Activated CD4-positive, alpha-beta memory T cell treated with anti-CD3 and anti-CD28 coated beads for 36 hours (primary cell): ENCODE measurements at regions of chr1 and their contacts with region 1.

Region 1: GRCh38 chr1:167263819-167264464 is 43.3 kb downstream of the POU2F1 start:
- DNase-seq: no peak
- H3K4me3 Mint-ChIP-seq: no peak overlapping the region
- H3K27ac Mint-ChIP-seq: no peak overlapping the region
- H3K4me1 Mint-ChIP-seq: peaks cover 23% of the 10 kb centered on the region
- H3K27me3 Mint-ChIP-seq: no peaks in the 10 kb centered on the region

Region 2: DNA sequence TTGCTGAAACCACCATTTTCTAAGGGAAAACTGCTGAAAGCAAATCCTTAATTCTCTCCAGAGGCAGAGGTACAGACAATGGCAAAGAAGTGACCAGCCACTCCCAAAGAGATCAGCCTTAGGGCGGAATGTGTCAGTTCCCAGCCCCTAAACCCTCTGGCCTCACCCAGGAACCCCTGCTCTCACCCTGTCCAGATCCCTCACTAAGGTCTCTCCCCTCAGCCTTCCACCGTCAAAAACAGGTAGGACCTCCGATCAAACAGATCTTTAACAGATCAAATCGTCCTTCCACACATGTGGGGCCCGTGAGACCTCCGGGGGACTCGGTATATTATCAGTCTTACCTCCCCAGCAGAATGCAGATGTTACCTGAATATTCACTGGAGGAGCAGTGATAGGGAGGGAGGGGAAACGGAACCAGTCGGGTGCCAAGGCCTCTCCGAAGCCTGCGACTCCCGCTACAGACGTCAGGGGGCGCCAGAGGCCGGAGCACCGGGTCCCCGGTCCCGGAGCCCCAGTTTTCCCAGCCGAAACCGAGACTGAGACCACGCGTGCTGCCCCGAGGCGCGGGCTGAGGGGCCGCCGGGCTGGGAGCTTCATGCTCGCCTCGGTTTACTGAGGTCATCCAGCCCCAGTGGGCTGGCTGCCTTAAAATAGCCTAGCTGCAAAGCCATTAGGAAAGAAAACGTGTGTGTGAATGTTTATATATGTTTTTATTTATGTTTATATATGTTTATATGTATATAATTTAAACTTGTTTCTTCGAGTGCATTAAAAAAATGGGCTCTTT is 197.4 kb before region 1 on chr1:
- CTCF ChIA-PET with region 1: interaction called, 4 read pairs
- POLR2A ChIA-PET with region 1: no interaction called
- intact Hi-C with region 1: loop called (anchors 5 kb)
- DNase-seq: peak; percentile 83
- H3K4me3 Mint-ChIP-seq: peak overlapping the region; percentile 30
- H3K27ac Mint-ChIP-seq: no peak overlapping the region
- H3K4me1 Mint-ChIP-seq: peaks cover 2% of the 10 kb centered on the region
- H3K27me3 Mint-ChIP-seq: no peaks in the 10 kb centered on the region

Region 3: DNA sequence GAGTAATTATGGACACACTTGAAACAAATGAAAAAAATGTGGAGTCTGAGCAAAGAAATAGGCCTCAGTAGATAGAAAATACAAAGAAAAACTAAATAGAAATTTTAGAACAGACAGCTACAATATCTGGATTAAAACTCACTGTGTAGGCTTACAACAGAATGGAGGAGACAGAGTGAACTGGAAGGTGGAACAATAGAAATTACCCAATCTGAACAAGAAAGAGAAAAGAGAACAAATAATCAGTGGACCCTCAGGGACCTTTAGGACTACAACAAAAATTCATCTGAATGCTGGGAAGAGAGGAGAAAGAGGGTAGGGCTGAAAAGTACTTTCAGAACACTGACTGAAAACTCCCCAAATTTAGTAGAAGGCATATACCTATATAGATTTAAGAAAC is 46.8 kb after region 1 on chr1:
- CTCF ChIA-PET with region 1: no interaction called
- POLR2A ChIA-PET with region 1: no interaction called
- intact Hi-C with region 1: loop called (anchors 2 kb)
- DNase-seq: no peak
- H3K4me3 Mint-ChIP-seq: no peak overlapping the region
- H3K27ac Mint-ChIP-seq: no peak overlapping the region
- H3K4me1 Mint-ChIP-seq: peaks cover 6% of the 10 kb centered on the region
- H3K27me3 Mint-ChIP-seq: no peaks in the 10 kb centered on the region

Region 4: GRCh38 chr1:167401260-167401873 is 137.4 kb after region 1 on chr1:
- CTCF ChIA-PET with region 1: interaction called, 13 read pairs
- POLR2A ChIA-PET with region 1: no interaction called
- intact Hi-C with region 1: no loop called
- DNase-seq: peak; percentile 64
- H3K4me3 Mint-ChIP-seq: no peak overlapping the region
- H3K27ac Mint-ChIP-seq: no peak overlapping the region
- H3K4me1 Mint-ChIP-seq: no peaks in the 10 kb centered on the region
- H3K27me3 Mint-ChIP-seq: no peaks in the 10 kb centered on the region

Region 5: DNA sequence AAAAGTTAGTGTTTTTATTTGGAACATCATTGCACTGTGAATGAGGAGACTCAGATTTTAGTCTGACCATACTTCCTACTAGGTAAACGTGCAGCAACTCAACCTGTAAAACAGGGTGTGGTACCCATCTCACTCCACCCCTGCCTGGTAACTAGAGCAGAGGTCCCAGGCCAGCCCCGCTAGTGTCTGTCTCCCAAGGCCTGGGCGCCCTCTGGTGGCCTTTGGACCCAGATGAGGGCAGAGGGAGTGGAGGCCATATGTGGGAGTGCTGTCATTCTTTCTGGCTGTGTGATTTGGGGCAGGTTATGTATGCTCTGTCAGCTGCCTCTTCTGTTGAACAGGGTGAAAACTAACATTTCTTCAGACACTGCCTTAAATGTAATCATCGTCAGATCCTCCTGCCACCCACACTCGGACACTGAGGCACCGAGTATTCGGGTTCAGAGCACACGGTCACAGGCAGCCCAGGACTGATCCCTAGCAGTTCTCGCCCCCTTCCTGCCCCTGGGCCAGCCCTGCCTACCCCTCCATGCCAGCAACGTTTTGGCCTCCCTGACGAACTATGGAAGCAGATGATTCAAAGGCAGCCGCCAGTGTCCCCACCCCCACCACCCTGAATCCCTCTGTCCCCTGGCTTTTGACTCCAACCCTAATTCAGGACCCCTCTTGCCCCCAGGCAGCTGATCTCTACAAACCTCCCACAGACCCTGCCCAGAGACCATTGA is 178.3 kb after region 1 on chr1:
- CTCF ChIA-PET with region 1: interaction called, 37 read pairs
- POLR2A ChIA-PET with region 1: no interaction called
- intact Hi-C with region 1: loop called (anchors 2 kb)
- DNase-seq: peak; percentile 91
- H3K4me3 Mint-ChIP-seq: no peak overlapping the region
- H3K27ac Mint-ChIP-seq: peak overlapping the region; percentile 64
- H3K4me1 Mint-ChIP-seq: peaks cover 71% of the 10 kb centered on the region
- H3K27me3 Mint-ChIP-seq: no peaks in the 10 kb centered on the region

Region 6: DNA sequence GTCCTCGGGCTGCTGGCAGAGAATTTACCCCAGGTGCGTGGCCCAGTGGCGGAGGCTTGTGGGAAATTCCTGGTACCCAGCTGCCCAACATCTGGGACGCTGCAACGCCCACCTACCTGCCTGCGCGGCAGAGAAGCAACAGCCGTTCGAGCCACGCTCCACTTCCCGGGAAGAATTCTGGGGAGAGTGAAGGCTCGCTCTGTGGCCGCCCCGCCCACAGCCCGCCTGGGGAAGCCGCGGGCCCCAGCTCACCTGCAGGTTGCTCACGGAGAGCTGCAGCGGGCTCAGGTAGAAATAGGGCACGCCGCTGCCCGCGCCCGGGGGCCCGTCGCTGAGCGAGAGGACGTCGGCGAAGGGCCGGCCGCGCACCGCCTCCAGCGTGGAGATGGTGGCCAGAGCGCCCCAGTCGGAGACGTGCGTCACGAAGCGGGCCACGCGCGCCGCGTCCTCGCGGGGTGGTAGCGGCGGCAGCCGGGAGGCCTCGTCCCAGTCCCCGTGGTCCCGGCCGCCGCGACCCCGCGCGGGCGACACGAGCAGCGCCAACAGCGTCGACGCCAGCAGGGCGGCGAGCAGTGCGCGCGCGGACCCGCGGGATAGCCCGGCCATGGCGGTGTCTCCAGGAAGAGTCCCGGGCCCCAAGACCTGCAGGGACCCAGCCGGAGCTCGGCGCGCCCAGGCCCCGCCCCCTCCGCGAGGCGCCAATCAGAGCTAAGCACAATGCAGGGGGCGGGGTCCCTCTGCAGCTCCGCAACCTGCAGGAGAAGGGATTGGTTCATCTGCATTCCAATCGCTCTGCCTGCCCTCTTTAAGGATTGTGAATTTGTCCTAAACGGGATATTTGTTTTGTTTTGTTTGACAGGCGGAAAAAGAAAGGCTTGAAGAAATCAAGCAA is 289.4 kb after region 1 on chr1 and contains the start of gene CREG1:
- CTCF ChIA-PET with region 1: interaction called, 26 read pairs
- POLR2A ChIA-PET with region 1: interaction called, 3 read pairs
- intact Hi-C with region 1: no loop called
- DNase-seq: peak; percentile 94
- H3K4me3 Mint-ChIP-seq: peak within 1 kb of the TSS; percentile 84
- H3K27ac Mint-ChIP-seq: no peak within 1 kb of the TSS
- H3K4me1 Mint-ChIP-seq: peaks cover 35% of the 10 kb centered on the region
- H3K27me3 Mint-ChIP-seq: no peaks in the 10 kb centered on the region
- total RNA-seq, gene CREG1: 13.5 to 14.6 TPM